Naive thymus-derived CD4-positive, alpha-beta T cell (primary cell): ENCODE measurements at regions of chr19 and their contacts with region 1.

Region 1: GRCh38 chr19:41928221-41928683 is at the start of gene ERFL:
- DNase-seq: peak in 2 of 9 donors; percentile 32 to 53
- ATAC-seq: peak; percentile 50
- H3K4me3 ChIP-seq: peak within 1 kb of the TSS; percentile 93
- H3K4me3 Mint-ChIP-seq: peak within 1 kb of the TSS in 6 of 10 donors; percentile 88 to 99 (median 91)
- H3K27ac ChIP-seq: peak within 1 kb of the TSS; percentile 70
- H3K27ac Mint-ChIP-seq: peak within 1 kb of the TSS; percentile 75 to 96 (median 90)
- H3K4me1 ChIP-seq: peaks cover 17 to 18% of the 10 kb centered on the region in 2 donors
- H3K4me1 Mint-ChIP-seq: peaks cover 23 to 41% (median 29%) of the 10 kb centered on the region in 7 donors
- H3K27me3 ChIP-seq: no peaks in the 10 kb centered on the region
- H3K27me3 Mint-ChIP-seq: peaks cover 0 to 9% (median 3%) of the 10 kb centered on the region in 5 donors
- total RNA-seq, gene ERFL: 3.0 to 15.0 (median 8.0) TPM

Region 2: GRCh38 chr19:41945135-41945766 is 17.0 kb after region 1 on chr19:
- CTCF ChIA-PET with region 1: interaction called, 7 read pairs
- POLR2A ChIA-PET with region 1: interaction called, 9 read pairs
- intact Hi-C with region 1: loop called in 1 of 2 experiments (anchors 2 kb)
- DNase-seq: peak; percentile 45 to 90 (median 82)
- ATAC-seq: peak; percentile 96
- H3K4me3 ChIP-seq: no peak overlapping the region
- H3K4me3 Mint-ChIP-seq: peak overlapping the region in 9 of 10 donors; percentile 39 to 77 (median 60)
- H3K27ac ChIP-seq: peak overlapping the region; percentile 57
- H3K27ac Mint-ChIP-seq: peak overlapping the region; percentile 84 to 100 (median 96)
- H3K4me1 ChIP-seq: peaks cover 23 to 41% of the 10 kb centered on the region in 2 donors
- H3K4me1 Mint-ChIP-seq: peaks cover 27 to 50% (median 41%) of the 10 kb centered on the region in 7 donors
- H3K27me3 ChIP-seq: no peaks in the 10 kb centered on the region
- H3K27me3 Mint-ChIP-seq: peaks cover 0 to 16% (median 4%) of the 10 kb centered on the region in 5 donors

Region 3: DNA sequence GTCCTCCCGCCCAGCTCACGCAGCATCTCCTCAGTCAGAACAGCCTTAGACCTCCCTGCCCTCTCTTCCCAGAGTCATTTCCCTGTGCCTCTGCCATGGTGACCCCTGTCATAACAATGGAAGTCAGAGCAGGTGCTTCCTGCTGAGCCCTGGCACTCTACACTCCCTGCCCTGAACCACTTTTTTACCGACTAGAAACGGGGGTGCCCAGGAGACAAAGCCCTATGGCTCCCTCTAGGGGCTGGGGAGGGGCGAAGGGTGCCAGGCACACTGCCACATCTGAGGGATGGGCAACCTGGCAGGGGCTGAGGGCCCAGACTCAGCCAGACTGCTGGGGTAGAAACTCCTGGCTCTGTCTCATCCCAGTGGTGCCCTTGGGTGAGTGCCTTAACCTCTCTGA is 164.1 kb after region 1 on chr19:
- CTCF ChIA-PET with region 1: no interaction called
- POLR2A ChIA-PET with region 1: no interaction called
- intact Hi-C with region 1: no loop called
- DNase-seq: peak in 5 of 9 donors; percentile 19 to 49 (median 32)
- ATAC-seq: peak; percentile 77
- H3K4me3 ChIP-seq: no peak overlapping the region
- H3K4me3 Mint-ChIP-seq: peak overlapping the region in 1 of 10 donors; percentile 59
- H3K27ac ChIP-seq: no peak overlapping the region
- H3K27ac Mint-ChIP-seq: peak overlapping the region in 3 of 9 donors; percentile 51 to 87 (median 75)
- H3K4me1 ChIP-seq: no peaks in the 10 kb centered on the region
- H3K4me1 Mint-ChIP-seq: peaks cover 12 to 37% (median 25%) of the 10 kb centered on the region in 7 donors
- H3K27me3 ChIP-seq: no peaks in the 10 kb centered on the region
- H3K27me3 Mint-ChIP-seq: no peaks in the 10 kb centered on the region